Activated CD8-positive, alpha-beta T cell treated with anti-CD3 and anti-CD28 coated beads, Interleukin-2, amount 10 ng/mL, durations not matched to agents 7 days and 5 days (primary cell): ENCODE measurements at regions of chr17 and their contacts with region 1.

Region 1: DNA sequence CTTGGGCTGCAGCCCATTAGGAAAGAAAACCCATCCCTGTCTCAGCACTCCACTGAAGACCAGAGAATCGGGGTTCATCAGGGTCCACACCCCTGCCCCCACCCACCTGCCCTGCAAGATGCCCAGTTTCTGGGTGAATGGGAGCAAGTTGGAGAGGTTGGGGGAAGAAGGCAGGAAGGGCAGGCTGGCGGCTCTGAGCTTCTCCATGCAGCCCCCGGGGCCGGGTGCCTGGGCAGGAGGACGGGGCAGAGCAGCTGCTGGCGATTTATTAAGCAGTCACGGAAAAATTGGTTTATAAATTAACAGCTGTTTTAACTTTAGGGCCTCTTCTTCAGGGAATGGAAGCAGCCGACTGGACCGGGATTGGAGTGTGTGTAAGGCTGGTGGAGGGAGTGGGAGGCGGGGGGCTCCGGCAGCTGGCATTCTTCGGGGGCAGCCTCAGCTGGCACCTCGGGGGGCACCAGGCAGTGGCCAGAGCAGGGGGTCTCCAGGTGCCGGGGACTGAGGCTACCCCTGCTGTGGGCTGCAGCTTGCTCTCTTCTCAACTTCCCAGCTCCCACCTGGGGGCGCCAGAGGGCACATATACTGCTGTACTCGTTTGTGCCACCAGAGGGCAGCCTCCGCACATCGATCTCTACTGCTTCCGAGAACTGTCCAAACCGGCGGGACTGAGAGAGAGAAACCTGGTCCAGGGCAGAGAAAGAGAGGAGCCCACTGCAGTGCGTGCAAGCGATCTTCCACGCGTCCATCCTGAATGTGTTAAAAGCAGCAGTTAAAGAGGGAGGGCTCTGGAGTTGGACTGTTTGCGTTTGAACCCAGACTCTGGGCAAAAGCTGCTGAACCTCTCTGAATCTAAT is 5.0 kb upstream of the PPP1R1B start:
- DNase-seq: peak; percentile 91
- ATAC-seq: peak; percentile 73
- H3K4me3 Mint-ChIP-seq: peak overlapping the region; percentile 62
- H3K27ac Mint-ChIP-seq: peak overlapping the region; percentile 79
- H3K4me1 Mint-ChIP-seq: peaks cover 27% of the 10 kb centered on the region
- H3K27me3 Mint-ChIP-seq: peaks cover 39% of the 10 kb centered on the region

Region 2: DNA sequence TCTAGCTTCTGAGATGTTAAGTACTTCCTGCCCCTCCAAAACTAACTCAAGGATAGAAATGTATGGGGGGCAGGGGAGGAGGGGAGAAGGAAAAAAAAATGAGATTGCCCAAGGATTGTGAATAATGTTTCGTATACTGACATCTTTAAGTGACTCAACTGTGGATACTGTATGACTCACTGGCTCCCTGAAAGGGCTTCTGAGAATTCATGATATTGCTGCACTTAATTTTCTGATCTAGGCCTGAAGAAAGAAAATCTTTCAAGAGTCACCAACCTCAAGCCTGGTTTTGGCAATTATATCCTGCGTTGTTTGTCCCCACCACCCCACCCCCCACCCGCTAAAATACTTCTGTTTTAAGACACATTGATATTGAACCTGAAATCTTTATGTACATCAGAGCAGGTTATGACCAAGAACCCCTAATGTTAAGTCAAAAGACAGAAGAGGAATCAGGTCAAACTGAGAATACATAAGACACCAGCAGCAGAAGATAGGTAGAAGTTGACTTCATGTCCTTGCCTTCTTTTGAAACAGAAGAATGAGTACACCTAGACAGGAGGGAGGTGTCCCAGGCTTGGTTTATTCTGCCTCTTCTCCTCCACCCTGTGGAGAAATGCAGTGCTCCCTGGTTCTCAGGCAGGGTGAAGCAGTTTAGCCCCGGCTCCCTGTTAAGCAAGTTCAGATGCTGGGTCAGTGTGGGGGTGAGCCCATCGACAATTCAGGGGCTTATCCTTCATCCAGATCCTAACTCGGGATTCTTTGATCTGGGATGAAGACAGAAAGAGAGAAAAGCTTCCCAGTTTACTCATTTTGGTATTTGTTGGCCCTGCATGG is 217.0 kb before region 1 on chr17:
- CTCF ChIA-PET with region 1: no interaction called
- POLR2A ChIA-PET with region 1: no interaction called
- DNase-seq: no peak
- ATAC-seq: no peak
- H3K4me3 Mint-ChIP-seq: no peak overlapping the region
- H3K27ac Mint-ChIP-seq: no peak overlapping the region
- H3K4me1 Mint-ChIP-seq: peaks cover 34% of the 10 kb centered on the region
- H3K27me3 Mint-ChIP-seq: no peaks in the 10 kb centered on the region

Region 3: DNA sequence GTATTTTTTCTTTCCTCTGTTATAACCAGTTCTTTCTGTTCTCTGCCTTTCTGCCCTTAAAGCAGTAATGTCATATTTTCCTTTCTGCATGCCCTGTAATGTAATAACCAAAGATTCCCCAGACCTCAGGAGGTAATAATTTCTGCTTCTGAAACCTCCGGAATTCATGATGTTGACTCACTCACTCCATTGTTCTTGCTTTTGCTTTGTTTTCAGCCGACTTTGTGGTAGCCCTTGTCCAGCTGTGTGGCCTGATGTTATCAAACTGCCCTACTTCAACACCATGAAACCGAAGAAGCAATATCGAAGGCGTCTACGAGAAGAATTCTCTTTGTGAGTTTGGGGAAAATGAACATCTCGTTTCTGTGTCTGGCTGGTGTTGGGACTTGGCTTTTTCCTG is 104.5 kb before region 1 on chr17:
- CTCF ChIA-PET with region 1: no interaction called
- POLR2A ChIA-PET with region 1: no interaction called
- DNase-seq: no peak
- ATAC-seq: no peak
- H3K4me3 Mint-ChIP-seq: no peak overlapping the region
- H3K27ac Mint-ChIP-seq: no peak overlapping the region
- H3K4me1 Mint-ChIP-seq: peaks cover 1% of the 10 kb centered on the region
- H3K27me3 Mint-ChIP-seq: no peaks in the 10 kb centered on the region

Region 4: GRCh38 chr17:39538866-39539265 is 82.9 kb before region 1 on chr17:
- CTCF ChIA-PET with region 1: interaction called, 14 read pairs
- POLR2A ChIA-PET with region 1: no interaction called
- DNase-seq: peak; percentile 32
- ATAC-seq: peak; percentile 88
- H3K4me3 Mint-ChIP-seq: no peak overlapping the region
- H3K27ac Mint-ChIP-seq: peak overlapping the region; percentile 58
- H3K4me1 Mint-ChIP-seq: peaks cover 22% of the 10 kb centered on the region
- H3K27me3 Mint-ChIP-seq: no peaks in the 10 kb centered on the region

Region 5: GRCh38 chr17:39599004-39599664 is 22.6 kb before region 1 on chr17:
- CTCF ChIA-PET with region 1: interaction called, 12 read pairs
- POLR2A ChIA-PET with region 1: no interaction called
- DNase-seq: no peak
- ATAC-seq: no peak
- H3K4me3 Mint-ChIP-seq: no peak overlapping the region
- H3K27ac Mint-ChIP-seq: no peak overlapping the region
- H3K4me1 Mint-ChIP-seq: peaks cover under 1% of the 10 kb centered on the region
- H3K27me3 Mint-ChIP-seq: peaks cover 89% of the 10 kb centered on the region

Region 6: DNA sequence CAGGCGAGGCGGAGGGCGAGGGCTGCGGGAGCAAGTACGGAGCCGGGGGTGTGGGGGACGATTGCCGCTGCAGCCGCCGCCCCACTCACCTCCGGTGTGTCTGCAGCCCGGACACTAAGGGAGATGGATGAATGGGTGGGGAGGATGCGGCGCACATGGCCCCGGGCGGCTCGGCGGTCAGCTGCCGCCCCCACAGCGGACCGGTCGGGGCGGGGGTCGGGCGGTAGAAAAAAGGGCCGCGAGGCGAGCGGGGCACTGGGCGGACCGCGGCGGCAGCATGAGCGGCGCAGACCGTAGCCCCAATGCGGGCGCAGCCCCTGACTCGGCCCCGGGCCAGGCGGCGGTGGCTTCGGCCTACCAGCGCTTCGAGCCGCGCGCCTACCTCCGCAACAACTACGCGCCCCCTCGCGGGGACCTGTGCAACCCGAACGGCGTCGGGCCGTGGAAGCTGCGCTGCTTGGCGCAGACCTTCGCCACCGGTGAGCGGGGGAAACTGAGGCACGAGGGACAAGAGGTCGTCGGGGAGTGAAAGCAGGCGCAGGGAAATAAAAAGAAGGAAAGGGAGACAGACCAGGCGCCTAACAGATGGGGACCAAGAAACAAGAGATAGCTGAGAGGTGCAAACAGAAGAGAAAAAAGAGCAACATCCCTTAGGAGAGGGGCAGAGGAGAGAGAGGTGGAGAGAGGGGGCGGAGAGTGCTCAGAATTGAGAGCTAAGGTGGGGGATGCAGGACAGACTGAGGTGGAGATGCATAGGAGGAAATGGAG is 46.6 kb after region 1 on chr17 and contains the start of gene PNMT:
- CTCF ChIA-PET with region 1: interaction called, 195 read pairs
- POLR2A ChIA-PET with region 1: interaction called, 4 read pairs
- DNase-seq: peak; percentile 78
- ATAC-seq: peak; percentile 83
- H3K4me3 Mint-ChIP-seq: peak within 1 kb of the TSS; percentile 26
- H3K27ac Mint-ChIP-seq: no peak within 1 kb of the TSS
- H3K4me1 Mint-ChIP-seq: peaks cover 11% of the 10 kb centered on the region
- H3K27me3 Mint-ChIP-seq: peaks cover 29% of the 10 kb centered on the region
- total RNA-seq, gene PNMT: not detected

Region 7: GRCh38 chr17:39695089-39695474 is 73.3 kb after region 1 on chr17:
- CTCF ChIA-PET with region 1: interaction called, 15 read pairs
- POLR2A ChIA-PET with region 1: no interaction called
- DNase-seq: no peak
- ATAC-seq: peak; percentile 44
- H3K4me3 Mint-ChIP-seq: no peak overlapping the region
- H3K27ac Mint-ChIP-seq: no peak overlapping the region
- H3K4me1 Mint-ChIP-seq: peaks cover 6% of the 10 kb centered on the region
- H3K27me3 Mint-ChIP-seq: peaks cover 11% of the 10 kb centered on the region

Region 8: DNA sequence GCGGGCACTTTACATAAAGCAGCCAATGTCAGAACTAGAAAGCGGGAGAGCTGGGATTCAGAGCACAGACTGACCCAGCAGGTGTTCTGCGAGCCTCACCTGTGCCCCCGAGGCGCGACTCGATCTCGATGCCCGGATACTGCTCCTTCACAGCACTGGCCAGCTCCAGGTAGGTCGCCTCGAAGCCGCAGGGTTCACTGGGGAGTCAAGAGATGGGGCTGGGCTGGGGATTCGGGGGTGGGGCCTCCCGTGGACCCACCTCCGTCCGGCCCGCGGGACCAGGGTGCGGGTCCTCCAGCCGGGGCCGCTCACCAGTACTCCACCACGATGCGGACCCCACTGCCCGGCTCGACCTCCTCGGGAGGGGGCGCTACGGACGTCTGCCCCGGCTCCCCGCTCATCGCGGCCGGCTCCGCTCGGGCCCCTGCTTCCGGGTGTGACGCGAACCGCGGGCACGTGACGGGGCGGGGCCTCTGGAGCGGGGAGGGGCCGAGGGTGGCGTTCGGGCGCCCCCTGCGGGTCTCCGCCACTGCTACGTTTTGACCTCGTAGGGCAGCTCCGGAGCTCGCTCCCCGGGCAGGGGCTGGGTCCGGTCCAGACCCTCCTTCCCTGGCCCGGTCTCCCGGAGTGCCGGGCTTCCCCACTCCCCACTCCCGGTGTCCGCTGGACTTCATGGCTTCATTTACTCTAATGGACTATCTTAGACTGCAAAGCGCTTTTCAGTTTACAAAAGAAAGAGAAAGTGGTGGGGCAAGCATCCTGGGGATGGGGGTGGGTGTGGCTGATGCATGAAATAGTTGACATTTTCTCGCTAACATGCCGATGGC is 108.6 kb after region 1 on chr17 and contains the start of gene MIEN1:
- CTCF ChIA-PET with region 1: interaction called, 56 read pairs
- POLR2A ChIA-PET with region 1: interaction called, 5 read pairs
- DNase-seq: peak; percentile 95
- ATAC-seq: peak; percentile 92
- H3K4me3 Mint-ChIP-seq: peak within 1 kb of the TSS; percentile 91
- H3K27ac Mint-ChIP-seq: peak within 1 kb of the TSS; percentile 88
- H3K4me1 Mint-ChIP-seq: peaks cover 17% of the 10 kb centered on the region
- H3K27me3 Mint-ChIP-seq: peaks cover 6% of the 10 kb centered on the region
- total RNA-seq, gene MIEN1: 44.0 to 44.6 TPM

Region 9: DNA sequence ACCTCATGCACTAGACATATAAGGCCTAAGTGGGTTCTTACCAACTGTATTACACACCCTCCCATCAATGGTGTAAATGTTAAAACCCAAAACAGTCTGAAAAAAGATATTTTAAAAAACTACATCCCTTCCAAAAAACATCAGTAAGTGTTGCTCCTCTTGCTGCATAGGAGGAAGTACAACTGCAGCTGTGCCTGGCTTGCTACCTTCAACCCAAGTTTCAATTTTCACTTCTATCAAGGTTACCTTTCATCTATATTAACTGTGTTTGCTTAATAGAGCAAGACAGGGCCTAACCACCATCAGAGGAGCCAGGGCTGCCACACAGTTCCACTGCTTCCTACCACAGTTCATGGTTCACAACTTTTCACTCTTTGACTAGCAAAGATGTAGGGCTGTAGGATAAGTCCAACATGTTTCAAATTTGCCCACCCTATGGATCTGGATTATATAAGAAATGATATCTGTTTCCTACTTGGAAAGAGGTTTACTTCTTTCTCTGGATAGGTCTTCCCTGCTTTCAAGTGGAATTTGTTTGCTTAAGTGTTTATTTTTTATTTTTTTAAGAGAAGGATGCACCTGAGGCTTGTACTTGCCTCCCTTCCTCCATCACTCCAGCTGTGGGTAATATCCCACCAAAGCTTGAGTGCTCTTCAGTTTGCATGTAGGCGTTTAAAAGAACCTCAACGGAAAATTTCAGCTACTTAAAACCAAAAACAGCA is 172.7 kb after region 1 on chr17:
- CTCF ChIA-PET with region 1: interaction called, 12 read pairs
- POLR2A ChIA-PET with region 1: no interaction called
- DNase-seq: peak; percentile 59
- ATAC-seq: peak; percentile 72
- H3K4me3 Mint-ChIP-seq: peak overlapping the region; percentile 30
- H3K27ac Mint-ChIP-seq: peak overlapping the region; percentile 93
- H3K4me1 Mint-ChIP-seq: peaks cover 66% of the 10 kb centered on the region
- H3K27me3 Mint-ChIP-seq: no peaks in the 10 kb centered on the region